Activated naive CD4-positive, alpha-beta T cell treated with anti-CD3 and anti-CD28 coated beads for 36 hours (primary cell): ENCODE measurements at regions of chr3 and their contacts with region 1.

Region 1: DNA sequence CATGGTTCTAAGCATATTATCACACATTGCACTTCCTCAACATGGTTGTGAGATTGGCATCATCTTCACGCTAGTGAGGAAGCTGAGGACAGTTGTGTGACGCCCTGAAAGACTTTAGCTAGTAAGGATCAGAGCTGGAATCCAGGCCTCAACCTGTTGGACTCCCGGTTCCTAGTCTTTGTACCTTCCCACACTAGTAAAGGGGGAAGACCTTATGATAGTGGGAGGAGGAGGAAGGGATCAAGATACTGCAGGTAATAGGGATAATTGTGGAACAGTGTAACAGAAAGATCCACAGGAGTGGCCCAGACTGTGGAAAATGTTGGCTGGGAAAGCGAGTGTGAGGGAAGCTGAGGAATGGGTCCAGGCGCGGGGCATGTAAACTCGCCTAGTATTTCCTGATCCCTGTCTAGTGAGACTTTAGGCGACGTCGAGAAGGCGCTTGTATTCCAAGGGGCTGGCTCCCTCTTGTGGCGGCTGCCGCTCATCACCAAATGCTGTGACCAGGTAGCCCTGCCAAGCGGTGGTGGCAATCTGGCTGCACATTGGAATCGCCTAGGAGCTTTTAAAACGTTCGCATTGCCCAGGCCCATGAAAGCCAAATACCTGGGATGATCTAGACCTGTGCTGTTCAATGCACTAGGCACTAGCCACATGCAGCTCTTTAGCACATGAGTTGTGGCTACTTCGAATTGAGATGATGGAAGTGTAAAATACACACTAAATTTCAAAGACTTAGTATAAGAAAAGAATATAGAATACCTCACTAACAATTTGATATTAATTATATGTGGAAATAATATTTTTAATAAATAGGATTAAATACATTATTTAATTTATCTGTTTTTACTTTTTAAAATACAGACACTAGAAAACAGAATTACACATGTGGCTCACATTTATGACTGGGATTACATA is 38.8 kb upstream of the CLDN18 start:
- DNase-seq: peak; percentile 77
- H3K4me3 Mint-ChIP-seq: no peak overlapping the region
- H3K27ac Mint-ChIP-seq: no peak overlapping the region
- H3K4me1 Mint-ChIP-seq: no peaks in the 10 kb centered on the region
- H3K27me3 Mint-ChIP-seq: peaks cover 12% of the 10 kb centered on the region

Region 2: DNA sequence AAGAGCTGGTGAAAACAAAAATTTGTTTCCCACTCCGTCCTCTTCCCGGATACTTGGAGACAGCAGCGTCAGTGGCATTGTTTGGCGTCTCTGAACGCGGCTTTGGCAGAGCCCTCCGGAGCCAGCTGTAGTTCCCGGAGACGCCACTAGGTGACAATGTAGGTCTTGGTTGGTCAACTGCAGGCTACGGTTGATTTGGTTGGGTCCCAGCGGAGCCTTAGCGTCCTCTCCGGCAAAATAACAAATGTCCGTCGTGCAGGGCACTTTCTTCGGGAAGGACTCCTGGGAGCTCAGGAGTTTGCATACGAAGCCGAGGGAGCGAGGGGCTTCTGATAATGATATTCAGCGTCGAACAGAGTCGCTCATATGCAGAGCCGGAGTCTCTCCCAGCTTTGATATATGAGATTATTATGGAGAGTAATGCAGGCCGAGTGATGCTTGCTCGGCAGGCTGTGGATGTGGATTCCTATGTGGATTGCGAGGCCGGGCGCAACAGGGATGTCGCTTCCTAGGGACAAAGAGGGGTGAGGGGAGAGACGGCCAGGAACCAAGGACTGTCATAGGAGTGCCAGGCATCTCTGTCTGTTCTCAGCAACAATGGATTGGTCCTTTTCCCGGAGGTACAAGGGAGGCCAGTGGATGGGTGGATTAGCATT is 938.6 kb before region 1 on chr3:
- CTCF ChIA-PET with region 1: no interaction called
- intact Hi-C with region 1: loop called (anchors 1 kb)
- DNase-seq: peak; percentile 91
- H3K4me3 Mint-ChIP-seq: peak overlapping the region; percentile 40
- H3K27ac Mint-ChIP-seq: no peak overlapping the region
- H3K4me1 Mint-ChIP-seq: peaks cover 7% of the 10 kb centered on the region
- H3K27me3 Mint-ChIP-seq: peaks cover 15% of the 10 kb centered on the region

Region 3: GRCh38 chr3:137121704-137122314 is 849.4 kb before region 1 on chr3:
- CTCF ChIA-PET with region 1: no interaction called
- intact Hi-C with region 1: loop called (anchors 5 kb)
- DNase-seq: peak; percentile 48
- H3K4me3 Mint-ChIP-seq: no peak overlapping the region
- H3K27ac Mint-ChIP-seq: no peak overlapping the region
- H3K4me1 Mint-ChIP-seq: no peaks in the 10 kb centered on the region
- H3K27me3 Mint-ChIP-seq: no peaks in the 10 kb centered on the region

Region 4: GRCh38 chr3:137709011-137709601 is 262.1 kb before region 1 on chr3:
- CTCF ChIA-PET with region 1: no interaction called
- intact Hi-C with region 1: loop called (anchors 5 kb)
- DNase-seq: peak; percentile 6
- H3K4me3 Mint-ChIP-seq: no peak overlapping the region
- H3K27ac Mint-ChIP-seq: no peak overlapping the region
- H3K4me1 Mint-ChIP-seq: no peaks in the 10 kb centered on the region
- H3K27me3 Mint-ChIP-seq: no peaks in the 10 kb centered on the region

Region 5: DNA sequence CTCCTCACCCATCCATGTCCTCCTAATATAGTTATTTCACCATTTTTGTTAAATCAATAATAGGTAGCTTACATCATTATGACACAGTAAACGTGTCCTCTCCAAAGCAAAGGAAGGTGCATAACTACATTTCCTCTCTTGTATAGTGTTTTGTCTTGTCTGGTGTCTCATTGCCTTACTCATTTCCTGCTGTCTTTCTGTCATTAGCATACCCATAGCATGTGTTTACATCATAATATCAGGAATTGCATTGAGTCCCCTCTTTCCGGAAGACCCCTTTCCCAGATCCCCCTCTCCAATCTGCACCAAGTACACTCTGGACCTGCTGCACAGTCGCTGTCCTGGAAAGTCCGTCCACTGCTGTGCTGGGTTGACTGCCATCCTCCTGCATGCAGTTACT is 159.2 kb before region 1 on chr3:
- CTCF ChIA-PET with region 1: no interaction called
- intact Hi-C with region 1: no loop called
- DNase-seq: no peak
- H3K4me3 Mint-ChIP-seq: no peak overlapping the region
- H3K27ac Mint-ChIP-seq: no peak overlapping the region
- H3K4me1 Mint-ChIP-seq: no peaks in the 10 kb centered on the region
- H3K27me3 Mint-ChIP-seq: peaks cover 8% of the 10 kb centered on the region